Posterior vena cava (tissue), 2 donors: ENCODE measurements at regions of chr1 and their contacts with region 1.

Region 1: DNA sequence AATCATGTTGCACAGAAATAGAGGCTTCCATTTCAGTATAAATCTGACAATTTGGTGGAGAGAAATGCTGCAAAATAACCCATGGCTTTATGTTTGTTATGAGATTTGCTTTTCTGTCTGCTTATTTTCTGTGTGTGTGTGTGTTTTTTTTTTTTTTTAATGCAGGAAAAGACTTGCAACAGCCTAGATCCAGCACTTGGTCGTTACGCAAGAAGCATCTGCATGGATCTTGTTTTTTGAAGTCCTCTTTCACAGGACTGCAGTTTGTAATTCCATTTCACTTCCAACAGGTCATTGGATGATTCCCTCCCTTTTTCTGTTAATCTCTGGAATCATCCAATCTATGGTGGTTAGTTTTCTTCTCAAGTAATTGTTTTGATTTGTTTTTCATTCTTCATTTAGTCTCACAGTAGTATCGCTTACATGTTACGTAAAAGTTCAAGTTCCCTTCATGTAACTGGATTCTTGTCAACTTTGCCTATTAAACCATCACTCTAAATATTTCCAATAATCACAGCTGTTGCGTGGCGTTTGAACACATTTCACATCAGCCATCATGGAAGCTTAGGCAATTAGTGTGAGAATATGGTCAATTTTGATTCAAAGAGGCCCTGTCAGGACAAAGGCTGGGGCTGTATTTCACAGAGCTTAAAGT is 312.9 kb downstream of the NFIA start:
- DNase-seq: no peak

Region 2: GRCh38 chr1:60281360-60281932 is 1113.8 kb before region 1 on chr1:
- intact Hi-C with region 1: no loop called
- DNase-seq: no peak

Region 3: GRCh38 chr1:61406467-61406866 is 11.2 kb after region 1 on chr1:
- intact Hi-C with region 1: loop called in 1 of 2 experiments (anchors 1 kb)
- DNase-seq: no peak